ENCODE measurements at regions of chr20 and their contacts with region 1.

Region 1: DNA sequence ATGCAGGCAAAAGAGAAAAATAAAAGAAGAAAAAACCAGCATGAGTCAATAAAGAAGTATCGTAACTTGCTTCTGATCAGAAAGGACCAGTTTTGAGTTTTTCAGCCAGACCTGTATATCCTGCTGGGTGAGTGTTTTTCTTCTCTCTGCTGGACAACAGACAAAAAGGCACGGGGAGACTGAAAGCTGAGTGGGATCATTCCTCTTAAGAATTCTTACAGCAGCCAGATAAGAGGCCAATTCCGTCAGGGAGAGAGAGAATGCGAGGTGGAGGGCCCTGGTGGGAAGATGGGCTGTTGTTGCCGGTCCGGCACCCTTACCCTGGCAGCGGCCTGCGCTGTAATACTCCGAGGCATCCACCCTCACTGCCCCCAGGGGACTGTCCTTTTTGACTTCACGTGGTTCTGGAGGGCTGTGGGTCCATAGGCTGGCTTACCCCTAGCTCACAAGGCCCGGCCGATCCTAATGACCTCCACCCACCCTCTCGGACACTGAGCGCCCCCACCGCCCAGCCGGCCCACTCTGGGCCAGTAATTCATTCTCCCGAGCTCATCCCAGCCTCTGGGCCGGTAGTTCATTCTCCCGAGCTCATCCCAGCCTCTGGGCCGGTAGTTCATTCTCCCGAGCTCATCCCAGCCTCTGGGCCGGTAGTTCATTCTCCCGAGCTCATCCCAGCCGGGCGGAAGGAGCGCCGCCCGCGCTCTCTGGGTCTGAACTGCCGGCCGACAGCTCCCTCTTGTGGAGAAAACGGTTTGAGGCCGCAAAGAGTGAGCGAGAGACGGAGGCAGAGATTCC is 118.3 kb upstream of the SIRPA start:
- DNase-seq: peak; percentile 86
- ATAC-seq: peak; percentile 93
- H3K4me3 Mint-ChIP-seq: peak overlapping the region; percentile 77
- H3K27ac Mint-ChIP-seq: no peak overlapping the region
- H3K4me1 Mint-ChIP-seq: peaks cover 12% of the 10 kb centered on the region
- H3K27me3 Mint-ChIP-seq: peaks cover 13% of the 10 kb centered on the region

Region 2: DNA sequence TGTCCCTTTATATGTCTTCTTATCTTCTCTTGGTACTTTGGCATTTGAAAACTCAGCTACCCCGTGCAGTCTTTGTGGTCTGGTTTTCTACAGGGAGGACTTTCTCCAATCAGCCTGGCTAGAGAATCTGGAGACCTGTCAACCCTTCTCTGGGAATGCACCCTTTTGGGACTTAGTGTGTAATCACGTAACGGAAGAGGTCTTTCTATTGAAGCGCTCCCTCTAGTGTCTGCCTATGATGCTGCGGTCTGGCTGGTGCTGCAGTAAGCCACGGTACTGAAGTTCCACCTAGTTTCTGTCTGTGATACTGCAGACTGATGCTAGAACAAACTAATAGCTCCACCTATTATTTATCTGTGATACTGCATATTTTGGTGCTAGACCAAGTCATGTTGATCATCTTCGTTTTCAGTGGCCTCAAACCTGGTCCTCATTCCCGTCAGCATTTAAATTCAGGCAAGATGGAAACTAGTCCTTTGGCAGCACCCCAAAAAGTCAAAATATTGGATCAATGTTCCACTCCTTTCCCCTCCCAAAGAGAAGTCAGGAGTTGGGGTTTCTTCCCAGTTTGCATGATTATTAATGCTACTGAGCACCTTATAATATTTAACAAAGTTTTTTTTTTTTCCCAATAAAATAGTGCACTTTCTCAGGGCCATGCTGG is 273.2 kb before region 1 on chr20:
- CTCF ChIA-PET with region 1: interaction called, 59 read pairs
- POLR2A ChIA-PET with region 1: interaction called, 4 read pairs
- DNase-seq: peak; percentile 87
- ATAC-seq: peak; percentile 100
- H3K4me3 Mint-ChIP-seq: no peak overlapping the region
- H3K27ac Mint-ChIP-seq: no peak overlapping the region
- H3K4me1 Mint-ChIP-seq: peaks cover 3% of the 10 kb centered on the region
- H3K27me3 Mint-ChIP-seq: peaks cover 49% of the 10 kb centered on the region

Region 3: DNA sequence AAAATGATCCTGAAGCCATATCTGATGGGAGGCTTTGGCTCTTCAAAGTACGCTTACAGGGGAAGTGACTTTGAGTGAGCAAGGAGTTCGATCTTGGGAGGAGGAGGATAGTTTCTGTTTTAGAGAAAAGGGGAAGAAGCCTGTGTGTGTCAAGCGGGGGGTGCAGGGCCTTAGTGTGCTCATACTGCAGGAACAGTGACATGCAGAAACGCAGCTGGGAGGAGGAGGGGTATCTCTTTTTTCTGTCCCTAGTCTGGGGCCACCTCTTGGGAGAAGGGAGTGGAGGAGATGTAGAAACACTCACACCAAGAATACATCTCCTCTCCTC is 239.2 kb before region 1 on chr20:
- CTCF ChIA-PET with region 1: interaction called, 23 read pairs
- POLR2A ChIA-PET with region 1: no interaction called
- DNase-seq: no peak
- ATAC-seq: no peak
- H3K4me3 Mint-ChIP-seq: no peak overlapping the region
- H3K27ac Mint-ChIP-seq: peak overlapping the region; percentile 43
- H3K4me1 Mint-ChIP-seq: peaks cover 9% of the 10 kb centered on the region
- H3K27me3 Mint-ChIP-seq: peaks cover 1% of the 10 kb centered on the region

Region 4: DNA sequence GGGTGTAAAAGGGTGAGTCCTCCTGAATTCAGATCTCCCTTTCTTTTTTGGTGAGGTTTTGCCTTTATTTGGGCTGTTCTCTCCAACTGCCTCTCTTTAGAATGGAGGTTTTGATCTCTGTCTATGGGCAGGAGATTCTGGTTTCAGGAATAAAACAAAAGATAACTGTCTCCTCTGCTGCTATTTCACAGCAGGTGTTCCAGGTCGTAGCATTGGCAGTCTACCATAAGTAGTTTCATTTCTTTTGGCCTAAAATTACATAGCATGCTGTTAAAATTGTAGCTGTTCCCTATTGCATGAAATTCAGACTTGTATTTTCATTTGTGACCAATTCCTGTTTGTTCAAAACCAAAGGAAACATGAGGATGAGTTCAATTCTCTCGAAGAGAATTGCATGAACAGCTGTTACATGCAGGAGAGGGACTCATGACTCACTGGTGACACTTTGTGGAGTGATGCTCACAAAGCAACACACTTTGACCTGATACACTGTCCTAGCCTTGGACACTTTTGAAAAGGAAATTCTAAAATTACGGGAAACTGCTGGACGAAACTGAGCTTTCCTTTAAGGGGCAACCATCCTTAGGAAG is 42.5 kb before region 1 on chr20:
- CTCF ChIA-PET with region 1: interaction called, 17 read pairs
- POLR2A ChIA-PET with region 1: no interaction called
- DNase-seq: peak; percentile 62
- ATAC-seq: peak; percentile 88
- H3K4me3 Mint-ChIP-seq: no peak overlapping the region
- H3K27ac Mint-ChIP-seq: no peak overlapping the region
- H3K4me1 Mint-ChIP-seq: peaks cover 37% of the 10 kb centered on the region
- H3K27me3 Mint-ChIP-seq: no peaks in the 10 kb centered on the region

Region 5: DNA sequence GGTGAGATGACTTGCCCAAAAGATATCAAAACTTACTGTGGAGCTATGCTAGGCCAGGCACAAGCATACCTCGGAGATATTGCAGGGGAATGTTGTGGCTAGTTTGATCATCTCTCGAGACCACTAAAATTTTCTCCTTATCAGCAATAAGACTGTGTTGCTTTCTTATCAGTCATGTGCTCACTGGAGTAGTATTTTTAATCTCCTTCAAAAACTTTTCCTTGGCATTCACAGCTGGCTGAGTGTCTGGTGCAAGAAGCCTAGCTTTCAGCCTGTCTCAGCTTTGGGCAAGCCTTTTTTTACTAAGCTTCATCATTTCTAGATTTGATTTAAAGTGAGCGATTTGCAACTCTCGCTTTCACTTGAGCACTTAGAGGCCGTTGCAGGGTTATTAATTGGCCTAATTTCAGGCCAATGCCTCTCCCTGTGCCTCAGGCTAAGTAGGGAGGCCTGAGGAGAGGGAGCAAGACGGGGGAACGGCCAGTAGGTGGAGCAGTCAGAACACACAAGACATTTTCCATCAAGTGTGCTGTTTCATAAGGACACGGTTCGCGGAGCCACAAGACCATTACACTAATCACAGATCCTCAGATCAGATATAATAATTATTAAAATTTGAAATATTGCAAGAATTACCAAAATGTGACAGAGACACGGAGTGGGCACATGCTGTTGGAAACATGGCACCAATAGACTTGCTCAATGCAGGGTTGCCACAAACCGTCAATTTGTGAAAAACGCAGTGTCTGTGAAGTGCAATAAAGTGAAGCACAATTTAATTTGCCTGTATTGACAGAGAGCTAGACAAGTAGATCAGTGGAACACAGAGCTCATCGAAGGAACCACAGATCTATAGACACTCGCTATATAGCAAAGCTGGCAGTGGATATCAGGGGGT is 12.5 kb before region 1 on chr20:
- CTCF ChIA-PET with region 1: interaction called, 85 read pairs
- POLR2A ChIA-PET with region 1: interaction called, 5 read pairs
- DNase-seq: peak; percentile 77
- ATAC-seq: peak; percentile 95
- H3K4me3 Mint-ChIP-seq: no peak overlapping the region
- H3K27ac Mint-ChIP-seq: no peak overlapping the region
- H3K4me1 Mint-ChIP-seq: no peaks in the 10 kb centered on the region
- H3K27me3 Mint-ChIP-seq: peaks cover 16% of the 10 kb centered on the region